HEK293T (cell line): ENCODE measurements at regions of chr11 and their contacts with region 1.

Region 1: GRCh38 chr11:65117216-65118096 is at the start of gene ZNHIT2:
- DNase-seq: peak; percentile 92

Region 2: GRCh38 chr11:64935359-64936081 is 181.9 kb before region 1 on chr11 and contains the start of gene GPHA2:
- CTCF ChIA-PET with region 1: no interaction called
- POLR2A ChIA-PET with region 1: no interaction called
- DNase-seq: peak; percentile 56

Region 3: GRCh38 chr11:65180877-65181568 is 63.6 kb after region 1 on chr11:
- CTCF ChIA-PET with region 1: interaction called, 5 read pairs
- POLR2A ChIA-PET with region 1: interaction called, 18 read pairs
- DNase-seq: peak; percentile 87